ENCODE measurements at regions of chr17 and their contacts with region 1.

Region 1: GRCh38 chr17:38351412-38352222 is at the start of gene SOCS7:
- DNase-seq: peak; percentile 96 to 97
- ATAC-seq: peak; percentile 96 to 97 (median 96)
- H3K4me3 ChIP-seq: peak within 1 kb of the TSS; percentile 92
- H3K27ac ChIP-seq: peak within 1 kb of the TSS; percentile 84
- H3K4me1 ChIP-seq: peaks cover 33% of the 10 kb centered on the region
- H3K27me3 ChIP-seq: no peaks in the 10 kb centered on the region
- CTCF ChIP-seq: no peak
- total RNA-seq, gene SOCS7: 21.1 to 26.5 (median 24.5) TPM

Region 2: DNA sequence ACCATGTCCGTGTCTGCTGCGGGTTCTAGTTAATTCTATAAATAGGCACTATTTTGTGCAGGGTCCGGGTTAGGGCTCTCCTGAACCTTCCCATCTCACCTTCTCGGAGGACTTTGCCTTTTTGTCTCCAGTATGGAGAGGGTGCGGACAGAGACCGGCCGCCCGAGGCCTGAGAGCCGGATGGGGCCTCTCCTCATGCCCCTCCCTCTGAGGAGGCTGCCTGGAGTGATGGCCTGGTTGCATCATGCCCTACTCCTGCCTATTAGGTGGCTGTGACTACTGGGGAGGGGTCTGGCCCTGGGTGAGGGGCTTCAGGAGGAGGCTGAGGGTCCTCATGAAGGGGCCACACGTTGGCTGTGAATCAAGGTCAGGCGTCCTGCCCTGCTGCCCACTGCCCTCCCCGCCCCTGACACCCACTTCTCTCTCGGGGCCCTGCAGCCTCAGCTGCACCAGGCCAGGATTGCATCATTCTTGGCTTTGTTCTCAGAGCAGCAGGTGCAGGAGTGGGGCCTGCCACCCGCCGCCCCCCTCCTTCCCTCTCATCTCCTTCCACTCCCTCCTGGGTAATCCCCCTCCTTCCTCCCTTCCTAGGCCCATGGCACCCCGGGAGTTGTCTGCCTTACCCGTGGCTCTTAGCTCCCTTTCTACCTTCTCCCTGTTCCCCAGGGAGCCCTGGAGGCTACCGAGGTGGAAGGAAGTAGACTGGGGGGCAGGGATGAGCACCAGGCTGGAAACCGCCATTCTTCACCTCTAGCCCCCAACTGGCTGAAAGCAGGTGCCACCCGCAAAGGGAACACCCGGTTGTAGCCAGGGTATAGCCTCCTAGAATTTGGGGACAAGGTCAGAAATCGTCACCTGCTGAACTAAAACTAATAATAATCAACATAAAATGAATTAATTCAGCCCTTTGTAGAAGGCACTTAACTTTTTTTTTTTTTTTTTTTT is 63.9 kb after region 1 on chr17:
- intact Hi-C with region 1: loop called (anchors 1 to 2 kb)
- DNase-seq: peak; percentile 36 to 75
- ATAC-seq: peak; percentile 75 to 88 (median 84)
- H3K4me3 ChIP-seq: peak overlapping the region; percentile 57
- H3K27ac ChIP-seq: no peak overlapping the region
- H3K4me1 ChIP-seq: peaks cover 18% of the 10 kb centered on the region
- H3K27me3 ChIP-seq: peaks cover 0 to 24% (median 8%) of the 10 kb centered on the region in 3 donors
- CTCF ChIP-seq: no peak

Region 3: DNA sequence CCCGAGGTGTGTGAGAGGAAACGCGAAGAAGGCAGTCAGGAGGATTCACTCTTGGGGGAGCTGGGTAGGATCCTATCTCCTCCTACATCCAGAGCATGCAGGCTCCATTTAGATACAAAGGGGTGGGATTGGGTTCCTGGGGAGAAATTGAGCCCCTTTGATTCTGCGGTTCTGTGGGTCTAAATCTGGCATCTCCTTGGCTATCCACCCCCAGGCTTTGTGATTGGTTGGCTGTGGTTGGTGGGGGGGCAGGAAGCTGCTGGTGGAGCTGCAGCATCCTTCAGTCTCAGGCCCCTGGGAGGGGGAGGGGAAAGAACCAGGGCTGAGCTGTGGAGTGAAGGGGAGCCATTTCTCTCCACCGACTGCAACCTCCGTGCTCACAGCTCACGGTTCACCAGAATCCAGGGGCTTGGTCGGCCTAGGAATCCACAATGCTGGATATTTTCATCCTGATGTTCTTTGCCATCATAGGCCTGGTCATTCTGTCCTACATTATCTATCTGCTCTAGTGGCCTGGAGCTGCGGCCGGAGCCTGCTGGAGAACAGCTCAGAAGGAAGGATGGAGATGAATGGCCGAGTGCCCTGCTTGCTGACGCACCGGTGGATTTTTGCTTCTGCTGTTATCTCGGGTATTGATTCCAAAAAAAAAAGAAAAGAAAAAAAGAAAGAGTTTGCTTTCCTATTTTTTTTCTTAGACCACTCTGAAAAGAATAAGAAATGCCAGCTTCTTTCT is 573.8 kb after region 1 on chr17 and contains the start of gene LASP1NB:
- intact Hi-C with region 1: no loop called
- DNase-seq: peak; percentile 35 to 67
- ATAC-seq: no peak
- H3K4me3 ChIP-seq: no peak within 1 kb of the TSS
- H3K27ac ChIP-seq: no peak within 1 kb of the TSS
- H3K4me1 ChIP-seq: peaks cover 10% of the 10 kb centered on the region
- H3K27me3 ChIP-seq: no peaks in the 10 kb centered on the region
- CTCF ChIP-seq: no peak

Measured in psoas muscle (tissue), 8 donors.